Transverse colon (tissue), 4 donors: ENCODE measurements at regions of chr2 and their contacts with region 1.

Region 1: GRCh38 chr2:215793747-215794595 is 219.4 kb downstream of the MREG start:
- DNase-seq: peak; percentile 16
- H3K4me3 ChIP-seq: no peak overlapping the region
- H3K27ac ChIP-seq: peak overlapping the region; percentile 6 to 62 (median 34)
- H3K4me1 ChIP-seq: peaks cover 0 to 19% (median 5%) of the 10 kb centered on the region in 4 donors
- H3K27me3 ChIP-seq: no peaks in the 10 kb centered on the region
- CTCF ChIP-seq: no peak
- EP300 ChIP-seq: no peak
- POLR2A ChIP-seq: no peak

Region 2: DNA sequence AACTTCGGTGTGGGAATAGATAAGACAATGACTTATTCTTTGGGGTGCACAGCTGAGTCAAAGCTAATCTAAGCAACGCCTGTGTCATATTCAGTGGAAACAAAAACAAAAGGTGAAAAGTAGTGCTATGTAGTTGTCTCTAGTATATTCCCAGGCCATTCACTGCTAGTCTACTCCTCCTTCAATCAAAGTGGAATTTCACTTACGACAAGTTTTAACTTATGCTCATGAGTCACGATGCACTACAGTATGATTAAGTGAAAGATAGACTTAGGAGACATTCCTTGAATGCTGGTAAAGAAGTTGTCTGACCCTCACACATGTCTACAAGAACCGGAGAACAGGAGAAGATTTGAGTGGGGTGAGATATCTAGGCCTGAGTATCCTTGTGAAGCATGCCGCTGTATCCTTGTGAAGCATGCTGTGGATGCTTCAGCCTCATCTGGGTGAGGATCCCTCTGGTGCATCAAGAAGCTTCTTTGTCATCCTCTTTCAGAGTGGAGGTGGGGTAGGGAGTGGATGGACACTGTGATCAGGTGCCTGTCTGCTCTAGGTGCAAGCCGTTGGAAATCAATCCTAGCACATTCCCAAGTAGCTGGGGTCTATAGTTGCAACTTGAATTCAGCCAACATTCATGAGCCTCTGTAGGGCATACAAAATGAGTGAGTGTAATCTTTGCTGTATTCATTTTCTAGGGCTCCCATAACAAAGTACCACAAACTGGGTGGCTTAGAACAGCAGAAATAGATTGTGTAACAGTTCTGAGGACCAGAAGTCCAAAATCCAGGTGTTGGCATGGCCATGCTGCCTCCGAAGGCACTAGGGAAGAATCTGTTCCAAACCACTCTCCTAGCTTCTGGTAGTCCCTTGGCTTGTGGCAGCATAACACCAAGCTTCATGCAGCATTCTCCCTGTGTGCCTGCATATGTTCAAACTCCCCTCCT is 184.6 kb before region 1 on chr2:
- in situ Hi-C with region 1: no loop called
- intact Hi-C with region 1: no loop called
- DNase-seq: no peak
- H3K4me3 ChIP-seq: no peak overlapping the region
- H3K27ac ChIP-seq: no peak overlapping the region
- H3K4me1 ChIP-seq: no peaks in the 10 kb centered on the region
- H3K27me3 ChIP-seq: no peaks in the 10 kb centered on the region
- CTCF ChIP-seq: no peak
- EP300 ChIP-seq: no peak
- POLR2A ChIP-seq: no peak

Region 3: GRCh38 chr2:216004697-216005283 is 210.8 kb after region 1 on chr2:
- in situ Hi-C with region 1: no loop called
- intact Hi-C with region 1: loop called (anchors 5 kb)
- DNase-seq: no peak
- H3K4me3 ChIP-seq: no peak overlapping the region
- H3K27ac ChIP-seq: no peak overlapping the region
- H3K4me1 ChIP-seq: peaks cover 0 to 8% (median 4%) of the 10 kb centered on the region in 4 donors
- H3K27me3 ChIP-seq: no peaks in the 10 kb centered on the region
- CTCF ChIP-seq: no peak
- EP300 ChIP-seq: no peak
- POLR2A ChIP-seq: no peak

Region 4: DNA sequence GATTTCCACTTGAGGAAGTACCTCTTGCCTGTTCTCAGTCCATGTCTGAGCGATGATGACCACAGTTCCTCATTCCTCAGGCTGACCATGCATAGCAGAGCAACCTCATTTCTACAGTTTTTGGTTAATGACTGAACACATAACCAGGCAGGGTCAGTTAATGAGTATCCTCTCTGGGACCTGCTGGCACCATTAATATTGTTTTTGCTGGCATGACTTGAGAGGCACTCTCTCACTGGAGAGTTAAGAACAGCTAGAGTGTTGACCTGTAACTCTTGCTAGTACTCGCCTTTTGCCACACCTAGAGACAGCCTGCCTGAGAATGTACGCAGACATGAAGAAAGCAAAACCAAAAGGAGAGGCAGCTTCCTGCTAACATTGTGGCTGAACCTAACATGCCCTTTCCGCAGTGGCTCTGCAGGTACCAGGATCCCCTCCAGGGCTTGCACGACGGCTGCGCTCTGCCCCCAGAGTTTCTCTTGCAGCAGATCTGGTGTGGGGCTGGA is 263.8 kb after region 1 on chr2:
- in situ Hi-C with region 1: no loop called
- intact Hi-C with region 1: no loop called
- DNase-seq: peak; percentile 64
- H3K4me3 ChIP-seq: peak overlapping the region in 1 of 4 donors; percentile 41
- H3K27ac ChIP-seq: peak overlapping the region; percentile 74 to 82 (median 80)
- H3K4me1 ChIP-seq: peaks cover 4 to 24% (median 9%) of the 10 kb centered on the region in 4 donors
- H3K27me3 ChIP-seq: no peaks in the 10 kb centered on the region
- CTCF ChIP-seq: peak in 1 of 5 experiments; percentile 16
- EP300 ChIP-seq: no peak
- POLR2A ChIP-seq: peak; percentile 45